CD4-positive, alpha-beta memory T cell (primary cell): ENCODE measurements at regions of chr5 and their contacts with region 1.

Region 1: DNA sequence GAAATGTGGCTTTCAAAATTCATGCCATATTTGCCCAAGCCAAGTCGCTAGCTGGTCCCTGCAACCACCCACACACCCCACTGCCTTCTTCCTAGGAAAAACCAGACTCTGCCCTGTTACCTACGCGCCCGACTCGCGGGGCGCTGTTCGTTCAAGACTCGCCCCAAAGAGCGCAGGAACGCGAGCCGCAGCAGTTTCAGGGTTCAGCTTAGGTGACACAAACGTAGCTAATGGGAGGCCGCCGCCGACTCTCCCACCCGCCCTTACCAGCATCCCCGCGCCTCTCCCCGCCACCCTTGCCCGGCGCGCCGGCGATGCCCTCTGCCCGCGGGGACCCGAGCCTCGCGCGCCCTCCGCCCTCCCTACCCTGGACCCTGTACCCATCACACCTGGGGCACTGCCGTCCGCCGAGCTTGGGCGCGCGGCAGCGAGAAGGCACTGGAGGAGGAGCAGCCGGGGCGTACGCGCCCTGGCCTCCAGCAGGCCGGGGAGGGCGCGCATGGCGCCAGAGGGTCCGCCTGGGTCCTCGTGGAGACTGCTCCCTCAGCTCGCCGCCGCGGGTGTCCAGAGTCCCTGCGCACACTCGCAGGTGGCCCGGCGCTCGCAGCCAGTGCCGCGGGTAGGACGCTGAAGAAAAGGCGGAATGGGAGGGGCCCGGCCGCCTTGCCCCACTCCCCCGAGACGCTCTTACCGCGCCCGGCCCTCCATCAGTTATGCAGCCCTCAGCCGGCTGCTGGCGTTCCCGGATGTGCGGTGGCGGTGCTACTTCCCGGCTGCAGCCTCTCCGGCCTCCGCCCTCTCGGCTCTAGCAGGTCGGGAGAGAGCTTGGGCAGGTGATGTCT is at the start of gene EMB:
- DNase-seq: peak; percentile 83 to 85 (median 84)
- H3K4me3 ChIP-seq: peak within 1 kb of the TSS; percentile 63 to 76
- H3K4me3 Mint-ChIP-seq: peak within 1 kb of the TSS; percentile 94 to 99 (median 98)
- H3K27ac ChIP-seq: peak within 1 kb of the TSS; percentile 75
- H3K27ac Mint-ChIP-seq: peak within 1 kb of the TSS; percentile 94 to 98 (median 96)
- H3K4me1 ChIP-seq: peaks cover 74% of the 10 kb centered on the region
- H3K4me1 Mint-ChIP-seq: peaks cover 38 to 90% (median 64%) of the 10 kb centered on the region in 4 donors
- H3K27me3 ChIP-seq: no peaks in the 10 kb centered on the region
- H3K27me3 Mint-ChIP-seq: no peaks in the 10 kb centered on the region
- total RNA-seq, gene EMB: 264 to 277 TPM

Region 2: GRCh38 chr5:50406874-50407273 is 34.0 kb before region 1 on chr5:
- CTCF ChIA-PET with region 1: interaction called, 14 read pairs
- POLR2A ChIA-PET with region 1: no interaction called
- intact Hi-C with region 1: no loop called
- DNase-seq: no peak
- H3K4me3 ChIP-seq: no peak overlapping the region
- H3K4me3 Mint-ChIP-seq: no peak overlapping the region
- H3K27ac ChIP-seq: no peak overlapping the region
- H3K27ac Mint-ChIP-seq: peak overlapping the region in 3 of 7 donors; percentile 16 to 70 (median 27)
- H3K4me1 ChIP-seq: peaks cover 47% of the 10 kb centered on the region
- H3K4me1 Mint-ChIP-seq: peaks cover 39 to 72% (median 54%) of the 10 kb centered on the region in 4 donors
- H3K27me3 ChIP-seq: no peaks in the 10 kb centered on the region
- H3K27me3 Mint-ChIP-seq: no peaks in the 10 kb centered on the region

Region 3: DNA sequence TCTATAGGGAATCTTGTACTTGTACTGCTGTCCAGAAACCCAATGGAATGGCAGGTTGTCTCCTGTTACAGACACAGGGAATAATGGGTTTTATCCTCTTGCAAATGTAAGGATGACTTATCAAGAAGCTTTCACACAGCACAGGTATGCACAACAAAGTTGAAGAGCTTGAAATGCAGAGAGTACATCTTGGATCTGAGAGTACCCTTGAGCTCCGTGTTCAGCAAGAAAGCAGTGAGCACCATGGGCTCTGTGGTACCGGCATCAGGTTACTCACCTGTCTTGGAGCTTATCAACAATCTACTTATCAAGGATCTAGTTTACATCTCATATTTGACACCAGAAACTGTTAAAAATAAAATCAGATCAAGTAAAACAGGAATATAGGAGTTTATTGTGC is 22.2 kb after region 1 on chr5:
- CTCF ChIA-PET with region 1: interaction called, 10 read pairs
- POLR2A ChIA-PET with region 1: interaction called, 27 read pairs
- intact Hi-C with region 1: loop called (anchors 1 kb)
- DNase-seq: no peak
- H3K4me3 ChIP-seq: no peak overlapping the region
- H3K4me3 Mint-ChIP-seq: no peak overlapping the region
- H3K27ac ChIP-seq: no peak overlapping the region
- H3K27ac Mint-ChIP-seq: peak overlapping the region in 1 of 7 donors; percentile 24
- H3K4me1 ChIP-seq: peaks cover 12% of the 10 kb centered on the region
- H3K4me1 Mint-ChIP-seq: peaks cover 10 to 17% (median 15%) of the 10 kb centered on the region in 4 donors
- H3K27me3 ChIP-seq: no peaks in the 10 kb centered on the region
- H3K27me3 Mint-ChIP-seq: no peaks in the 10 kb centered on the region

Region 4: DNA sequence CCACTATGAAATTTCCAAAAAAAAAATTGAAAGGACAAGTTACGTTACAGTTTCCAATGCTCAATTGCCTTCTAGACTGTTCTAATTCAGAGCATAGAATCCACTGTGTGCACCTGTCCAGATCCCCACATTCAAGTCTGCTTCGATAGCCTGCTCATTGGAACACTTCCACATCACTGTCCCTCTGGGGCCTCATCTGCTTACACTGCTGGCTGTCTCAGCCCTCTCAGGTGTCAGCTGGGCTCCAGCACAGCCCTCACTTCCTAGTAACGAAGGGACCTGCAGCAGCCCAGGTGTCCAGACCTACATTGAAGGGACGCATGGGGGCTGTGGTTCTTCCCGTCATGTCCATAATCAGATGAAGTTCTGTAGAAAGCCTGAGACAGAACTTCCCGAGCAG is 94.5 kb after region 1 on chr5:
- CTCF ChIA-PET with region 1: no interaction called
- POLR2A ChIA-PET with region 1: no interaction called
- intact Hi-C with region 1: no loop called
- DNase-seq: no peak
- H3K4me3 ChIP-seq: no peak overlapping the region
- H3K4me3 Mint-ChIP-seq: no peak overlapping the region
- H3K27ac ChIP-seq: no peak overlapping the region
- H3K27ac Mint-ChIP-seq: no peak overlapping the region
- H3K4me1 ChIP-seq: no peaks in the 10 kb centered on the region
- H3K4me1 Mint-ChIP-seq: peaks cover 4 to 9% (median 7%) of the 10 kb centered on the region in 4 donors
- H3K27me3 ChIP-seq: no peaks in the 10 kb centered on the region
- H3K27me3 Mint-ChIP-seq: no peaks in the 10 kb centered on the region

Region 5: DNA sequence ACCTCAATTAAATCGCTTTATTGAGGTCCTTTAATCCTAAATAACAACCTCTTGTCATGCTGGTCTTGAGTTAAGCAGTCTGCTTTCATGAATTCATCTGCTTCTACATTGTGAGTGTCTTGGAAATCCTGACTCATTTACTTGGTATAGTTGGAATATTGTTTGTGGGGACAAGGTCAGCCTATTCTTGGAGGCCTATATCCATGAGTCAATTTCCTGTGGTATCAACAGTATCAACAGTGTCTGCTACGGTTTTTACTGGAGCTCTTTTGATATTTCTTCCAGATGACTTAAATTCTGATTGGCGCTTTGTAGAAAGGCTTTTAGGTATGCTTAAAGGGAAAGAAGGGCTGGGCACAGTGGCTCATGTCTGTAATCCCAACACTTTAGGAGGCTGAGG is 154.3 kb after region 1 on chr5:
- CTCF ChIA-PET with region 1: interaction called, 3 read pairs
- POLR2A ChIA-PET with region 1: interaction called, 8 read pairs
- intact Hi-C with region 1: loop called (anchors 10 kb)
- DNase-seq: no peak
- H3K4me3 ChIP-seq: no peak overlapping the region
- H3K4me3 Mint-ChIP-seq: peak overlapping the region in 2 of 8 donors; percentile 31 to 57
- H3K27ac ChIP-seq: no peak overlapping the region
- H3K27ac Mint-ChIP-seq: peak overlapping the region in 5 of 7 donors; percentile 46 to 90 (median 64)
- H3K4me1 ChIP-seq: peaks cover 56% of the 10 kb centered on the region
- H3K4me1 Mint-ChIP-seq: peaks cover 39 to 65% (median 46%) of the 10 kb centered on the region in 4 donors
- H3K27me3 ChIP-seq: no peaks in the 10 kb centered on the region
- H3K27me3 Mint-ChIP-seq: no peaks in the 10 kb centered on the region

Region 6: DNA sequence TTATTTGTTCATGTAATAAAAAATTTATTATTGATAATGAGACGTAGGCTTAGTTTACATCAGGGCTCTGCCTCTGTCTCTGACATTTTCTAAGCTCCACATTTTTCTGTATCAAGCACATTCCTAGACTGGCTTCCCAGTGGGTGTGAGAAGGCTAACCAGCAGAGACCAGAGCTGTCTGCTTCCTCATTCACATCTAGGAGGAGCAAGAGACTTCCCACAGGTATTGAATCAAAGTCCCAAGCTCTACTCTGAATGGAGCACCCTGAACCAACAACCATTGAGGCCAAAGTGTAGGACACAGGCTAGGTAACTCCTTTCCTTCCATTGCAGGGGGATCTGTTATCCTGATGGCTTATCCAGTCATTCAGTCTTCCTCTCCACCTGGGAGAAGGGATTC is 298.0 kb after region 1 on chr5:
- CTCF ChIA-PET with region 1: interaction called, 3 read pairs
- POLR2A ChIA-PET with region 1: interaction called, 11 read pairs
- intact Hi-C with region 1: no loop called
- DNase-seq: no peak
- H3K4me3 ChIP-seq: no peak overlapping the region
- H3K4me3 Mint-ChIP-seq: no peak overlapping the region
- H3K27ac ChIP-seq: no peak overlapping the region
- H3K27ac Mint-ChIP-seq: peak overlapping the region in 5 of 7 donors; percentile 27 to 79 (median 62)
- H3K4me1 ChIP-seq: peaks cover 69% of the 10 kb centered on the region
- H3K4me1 Mint-ChIP-seq: peaks cover 53 to 80% (median 67%) of the 10 kb centered on the region in 4 donors
- H3K27me3 ChIP-seq: no peaks in the 10 kb centered on the region
- H3K27me3 Mint-ChIP-seq: no peaks in the 10 kb centered on the region

Region 7: GRCh38 chr5:50751064-50751657 is 310.3 kb after region 1 on chr5:
- CTCF ChIA-PET with region 1: interaction called, 8 read pairs
- POLR2A ChIA-PET with region 1: interaction called, 25 read pairs
- intact Hi-C with region 1: loop called (anchors 1 kb)
- DNase-seq: peak; percentile 68 to 75 (median 70)
- H3K4me3 ChIP-seq: no peak overlapping the region
- H3K4me3 Mint-ChIP-seq: peak overlapping the region in 7 of 8 donors; percentile 46 to 84 (median 70)
- H3K27ac ChIP-seq: peak overlapping the region; percentile 25
- H3K27ac Mint-ChIP-seq: peak overlapping the region; percentile 77 to 91 (median 90)
- H3K4me1 ChIP-seq: peaks cover 52% of the 10 kb centered on the region
- H3K4me1 Mint-ChIP-seq: peaks cover 41 to 68% (median 56%) of the 10 kb centered on the region in 4 donors
- H3K27me3 ChIP-seq: no peaks in the 10 kb centered on the region
- H3K27me3 Mint-ChIP-seq: no peaks in the 10 kb centered on the region